Activated naive CD4-positive, alpha-beta T cell treated with anti-CD3 and anti-CD28 coated beads for 36 hours (primary cell): ENCODE measurements at regions of chr5 and their contacts with region 1.

Region 1: DNA sequence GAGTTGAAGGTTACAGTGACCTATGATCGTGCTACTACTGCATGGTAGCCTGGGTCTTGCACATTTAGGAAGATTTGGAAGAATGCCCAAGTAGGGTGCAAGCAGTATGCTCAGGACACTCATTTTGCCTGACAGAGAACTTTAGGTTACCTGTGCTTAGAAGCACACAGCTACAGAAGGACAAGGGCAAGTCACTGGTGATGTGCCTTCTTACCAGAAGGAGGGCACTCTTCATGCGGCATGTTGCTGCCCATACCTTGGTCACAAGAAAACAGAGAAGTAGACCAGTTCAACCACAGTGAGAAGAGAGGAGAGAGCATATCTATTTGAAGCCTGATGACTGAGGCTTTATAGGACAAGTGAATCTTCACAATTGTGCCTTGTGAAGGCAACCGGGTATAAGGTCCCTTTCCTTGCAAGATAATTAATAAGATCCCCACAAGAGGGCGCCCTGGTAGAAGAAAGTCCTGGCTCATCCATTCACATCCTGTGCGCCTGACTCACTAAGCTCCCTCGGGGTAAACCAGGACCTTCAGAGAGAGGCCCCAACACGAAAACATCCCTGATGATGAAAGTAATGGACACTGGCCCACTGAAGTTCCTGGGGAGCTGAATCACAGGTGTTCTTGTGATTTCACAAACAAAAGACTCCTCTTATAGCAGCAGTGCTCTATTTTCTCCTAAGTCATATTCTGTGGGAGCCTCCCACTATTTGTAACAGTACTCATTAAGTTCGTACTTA is 38.1 kb upstream of the STARD4 start:
- DNase-seq: peak; percentile 88
- H3K4me3 Mint-ChIP-seq: no peak overlapping the region
- H3K27ac Mint-ChIP-seq: peak overlapping the region; percentile 31
- H3K4me1 Mint-ChIP-seq: peaks cover 27% of the 10 kb centered on the region
- H3K27me3 Mint-ChIP-seq: no peaks in the 10 kb centered on the region

Region 2: DNA sequence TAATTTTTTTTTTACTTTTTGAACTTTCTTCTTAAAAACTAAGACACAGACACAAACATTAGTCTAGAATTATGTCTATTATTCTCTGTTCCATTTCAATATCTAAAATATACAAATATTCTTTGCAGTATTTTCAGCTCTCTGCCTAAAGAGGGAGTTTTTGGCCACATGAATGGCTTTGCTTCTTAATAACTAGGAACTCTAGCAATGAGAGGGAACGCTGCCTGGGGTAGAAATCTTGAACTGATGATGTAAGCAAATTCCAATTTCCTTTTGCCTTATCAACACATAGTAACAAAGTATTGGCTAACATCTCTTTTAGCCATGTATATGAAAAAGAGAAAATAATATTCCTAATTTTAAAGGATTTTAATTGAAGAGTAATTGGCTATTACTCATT is 759.8 kb before region 1 on chr5:
- CTCF ChIA-PET with region 1: no interaction called
- intact Hi-C with region 1: no loop called
- DNase-seq: no peak
- H3K4me3 Mint-ChIP-seq: no peak overlapping the region
- H3K27ac Mint-ChIP-seq: no peak overlapping the region
- H3K4me1 Mint-ChIP-seq: no peaks in the 10 kb centered on the region
- H3K27me3 Mint-ChIP-seq: peaks cover 5% of the 10 kb centered on the region

Region 3: DNA sequence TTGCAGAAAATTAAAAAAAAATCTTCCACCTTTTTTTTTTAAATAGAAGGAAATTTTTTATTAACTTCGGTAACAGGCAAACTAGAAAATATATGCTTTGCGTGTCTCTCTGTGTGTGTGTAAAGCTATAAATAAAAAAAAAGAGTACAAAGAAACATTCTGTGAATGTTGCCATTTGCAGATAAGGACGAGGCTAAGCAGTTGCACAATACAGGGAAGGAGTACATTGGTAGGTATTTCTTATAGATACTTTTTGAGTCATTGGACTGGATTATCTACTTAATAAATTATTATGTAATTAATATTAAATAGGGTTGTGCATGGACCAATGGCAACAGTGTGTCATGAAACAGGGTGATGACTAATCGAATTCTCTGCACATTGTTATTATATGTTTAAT is 223.9 kb before region 1 on chr5:
- CTCF ChIA-PET with region 1: no interaction called
- intact Hi-C with region 1: no loop called
- DNase-seq: no peak
- H3K4me3 Mint-ChIP-seq: no peak overlapping the region
- H3K27ac Mint-ChIP-seq: no peak overlapping the region
- H3K4me1 Mint-ChIP-seq: peaks cover 18% of the 10 kb centered on the region
- H3K27me3 Mint-ChIP-seq: no peaks in the 10 kb centered on the region

Region 4: GRCh38 chr5:111512375-111513130 is 37.9 kb before region 1 on chr5 and contains the start of gene STARD4:
- CTCF ChIA-PET with region 1: interaction called, 3 read pairs
- intact Hi-C with region 1: loop called (anchors 1 kb)
- DNase-seq: peak; percentile 95
- H3K4me3 Mint-ChIP-seq: peak within 1 kb of the TSS; percentile 93
- H3K27ac Mint-ChIP-seq: peak within 1 kb of the TSS; percentile 94
- H3K4me1 Mint-ChIP-seq: peaks cover 37% of the 10 kb centered on the region
- H3K27me3 Mint-ChIP-seq: no peaks in the 10 kb centered on the region
- total RNA-seq, gene STARD4: 45.0 to 47.1 TPM

Region 5: GRCh38 chr5:111628901-111629300 is 78.5 kb after region 1 on chr5:
- CTCF ChIA-PET with region 1: interaction called, 3 read pairs
- intact Hi-C with region 1: loop called (anchors 1 kb)
- DNase-seq: no peak
- H3K4me3 Mint-ChIP-seq: no peak overlapping the region
- H3K27ac Mint-ChIP-seq: no peak overlapping the region
- H3K4me1 Mint-ChIP-seq: peaks cover 17% of the 10 kb centered on the region
- H3K27me3 Mint-ChIP-seq: no peaks in the 10 kb centered on the region

Region 6: GRCh38 chr5:111757355-111758283 is 207.2 kb after region 1 on chr5:
- CTCF ChIA-PET with region 1: interaction called, 3 read pairs
- intact Hi-C with region 1: loop called (anchors 1 kb)
- DNase-seq: peak; percentile 83
- H3K4me3 Mint-ChIP-seq: peak overlapping the region; percentile 85
- H3K27ac Mint-ChIP-seq: peak overlapping the region; percentile 77
- H3K4me1 Mint-ChIP-seq: peaks cover 16% of the 10 kb centered on the region
- H3K27me3 Mint-ChIP-seq: no peaks in the 10 kb centered on the region

Region 7: DNA sequence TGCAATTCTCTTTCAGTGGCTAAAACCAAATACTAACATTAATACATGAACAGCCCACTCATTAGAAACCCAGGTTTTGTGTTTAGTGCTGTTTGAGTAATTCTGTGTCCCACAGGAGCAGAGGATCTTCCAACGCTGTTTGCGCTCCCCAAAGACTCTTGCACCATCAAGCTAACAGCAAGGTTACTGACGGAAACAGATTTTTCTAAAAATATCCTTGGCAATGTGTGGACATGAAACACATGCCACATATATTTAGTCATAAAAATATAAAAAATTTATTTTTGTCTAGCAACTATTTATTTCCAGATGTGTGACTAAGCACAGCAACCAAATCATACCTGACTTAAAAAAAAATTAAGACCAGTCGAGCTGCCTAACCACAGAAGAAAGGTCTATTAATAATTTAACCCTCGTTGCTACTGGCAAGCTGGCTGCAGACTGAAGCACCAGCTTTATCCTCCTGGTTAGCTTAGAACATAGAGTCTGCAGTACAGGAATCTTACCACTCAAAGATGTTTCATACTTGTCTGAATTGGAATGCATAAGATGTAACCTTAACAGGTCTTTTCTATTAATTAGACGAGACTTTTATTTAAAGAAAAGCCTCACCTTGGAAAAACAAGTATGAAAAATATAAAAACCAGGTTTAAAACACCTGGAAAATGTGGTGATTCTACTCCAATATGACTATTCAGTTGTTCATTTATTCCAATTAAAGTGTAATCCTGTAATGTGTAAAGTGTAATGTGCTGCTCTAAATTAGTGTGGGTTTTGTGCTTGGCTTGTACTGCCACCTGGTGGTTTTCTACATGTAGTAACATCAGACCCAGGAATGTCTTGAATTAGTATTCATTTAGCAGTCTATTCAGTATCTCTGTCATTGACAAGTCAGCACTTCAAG is 596.1 kb after region 1 on chr5:
- CTCF ChIA-PET with region 1: interaction called, 21 read pairs
- intact Hi-C with region 1: loop called (anchors 1 kb)
- DNase-seq: peak; percentile 81
- H3K4me3 Mint-ChIP-seq: no peak overlapping the region
- H3K27ac Mint-ChIP-seq: no peak overlapping the region
- H3K4me1 Mint-ChIP-seq: no peaks in the 10 kb centered on the region
- H3K27me3 Mint-ChIP-seq: peaks cover 3% of the 10 kb centered on the region